Posterior vena cava (tissue), 2 donors: ENCODE measurements at regions of chr7 and their contacts with region 1.

Region 1: GRCh38 chr7:134859783-134860182 is 80.3 kb downstream of the CALD1 start:
- DNase-seq: no peak

Region 2: DNA sequence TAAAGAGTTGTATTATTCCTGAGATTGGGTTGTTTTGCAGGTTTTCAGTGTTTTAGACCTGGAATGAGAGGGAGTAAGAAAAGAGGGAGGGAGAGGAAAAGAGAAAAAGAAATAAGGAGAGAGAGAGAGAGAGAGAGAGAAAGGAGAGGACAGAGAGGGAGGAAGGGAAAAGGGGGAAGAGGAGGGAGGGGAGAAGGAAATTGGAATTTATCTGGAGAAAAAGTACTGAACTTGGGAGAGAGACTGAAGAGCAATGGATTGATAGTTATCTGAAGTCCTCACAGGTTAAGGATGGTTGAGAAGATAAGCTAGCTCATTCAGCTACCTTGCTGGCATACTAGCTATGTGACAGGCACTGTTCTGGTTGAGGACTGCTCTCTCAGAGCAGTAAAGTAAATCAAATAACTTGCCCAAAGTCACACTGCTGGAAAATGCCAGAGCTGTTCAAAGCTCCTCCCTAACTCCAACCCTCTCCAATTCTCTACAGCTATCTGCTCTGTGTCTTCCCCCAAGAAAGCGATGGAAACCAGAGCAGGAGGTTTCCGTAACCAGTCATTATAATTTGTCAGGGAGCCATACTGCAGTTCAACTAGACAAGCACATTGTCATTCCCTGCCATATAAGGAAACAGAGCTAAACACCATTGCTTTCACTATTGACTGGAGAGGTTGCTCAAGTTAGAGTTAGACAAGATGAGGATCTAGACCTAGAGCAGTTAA is 69.7 kb before region 1 on chr7:
- intact Hi-C with region 1: no loop called
- DNase-seq: no peak

Region 3: DNA sequence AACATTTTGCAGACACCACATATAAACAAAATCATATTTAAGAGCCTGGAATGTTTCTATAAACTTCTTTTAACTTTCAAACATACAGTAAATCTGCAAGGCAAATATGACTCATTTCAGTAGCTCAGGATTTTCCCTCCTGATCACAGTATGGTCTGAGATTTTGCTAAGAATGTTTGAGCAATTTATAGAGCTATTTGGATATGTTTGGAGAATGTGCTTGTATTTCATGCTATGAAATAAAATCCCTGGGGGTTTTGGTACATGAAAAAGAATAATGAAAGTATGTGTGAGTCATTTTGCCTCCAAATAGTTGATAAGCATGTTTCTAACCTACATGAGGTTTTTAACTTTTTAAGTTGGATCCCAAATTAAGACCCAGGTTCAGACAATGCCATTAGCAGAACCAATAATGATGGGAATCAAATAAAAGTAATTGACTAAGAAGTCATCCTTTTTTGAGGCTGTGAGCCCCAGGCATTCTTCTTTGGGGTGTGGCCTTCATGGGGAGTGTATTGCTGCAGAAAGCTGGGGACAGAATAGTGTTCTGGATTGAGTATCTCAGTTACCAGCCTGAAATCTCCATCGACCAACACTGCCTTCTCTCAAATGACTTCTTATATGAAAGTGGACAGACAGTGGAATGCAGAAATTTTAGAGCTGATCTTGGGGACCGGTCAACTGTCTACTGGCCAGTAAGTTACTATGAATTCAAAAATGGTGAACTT is 60.4 kb after region 1 on chr7:
- intact Hi-C with region 1: loop called in 1 of 2 experiments (anchors 2 kb)
- DNase-seq: no peak